Activated naive CD4-positive, alpha-beta T cell treated with anti-CD3 and anti-CD28 coated beads for 36 hours (primary cell): ENCODE measurements at regions of chr11 and their contacts with region 1.

Region 1: GRCh38 chr11:20387241-20388095 is at the start of gene PRMT3:
- DNase-seq: peak; percentile 96
- H3K4me3 Mint-ChIP-seq: peak within 1 kb of the TSS; percentile 96
- H3K27ac Mint-ChIP-seq: peak within 1 kb of the TSS; percentile 99
- H3K4me1 Mint-ChIP-seq: peaks cover 32% of the 10 kb centered on the region
- H3K27me3 Mint-ChIP-seq: no peaks in the 10 kb centered on the region
- total RNA-seq, gene PRMT3: 31.0 to 33.2 TPM

Region 2: DNA sequence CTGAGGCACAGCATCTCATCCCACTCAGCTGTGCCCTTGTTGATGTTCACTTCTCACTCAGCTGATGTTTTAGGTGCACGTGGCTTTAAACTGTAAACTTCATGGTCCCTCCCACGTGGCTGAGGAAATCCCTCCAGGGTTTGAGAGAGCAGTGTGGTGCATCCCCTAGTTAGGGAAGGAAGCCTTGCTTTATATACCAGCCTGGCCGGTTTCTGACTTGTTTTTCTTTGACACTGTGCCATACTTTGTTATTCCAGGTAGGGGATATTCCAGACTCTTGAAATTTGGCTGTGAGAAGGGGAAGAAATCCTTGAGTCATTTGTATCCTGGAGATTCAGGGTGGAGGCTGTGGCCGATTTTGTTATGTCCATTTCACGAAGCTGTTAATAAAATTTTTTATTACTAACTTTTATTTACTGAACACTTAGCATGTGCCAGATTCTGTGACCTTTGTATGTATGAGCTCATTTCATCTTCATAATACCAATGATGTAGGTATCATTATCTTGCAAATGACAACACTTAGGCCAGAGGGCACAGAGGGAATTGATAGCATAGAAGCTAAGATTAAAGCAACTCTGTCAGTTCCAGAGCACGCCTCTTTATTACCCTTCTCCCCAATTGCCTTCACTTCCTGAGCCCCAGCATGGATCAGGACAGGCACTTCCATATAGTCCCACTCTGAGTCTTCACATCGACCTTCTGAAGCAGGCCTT is 558.2 kb before region 1 on chr11:
- CTCF ChIA-PET with region 1: no interaction called
- intact Hi-C with region 1: no loop called
- DNase-seq: no peak
- H3K4me3 Mint-ChIP-seq: no peak overlapping the region
- H3K27ac Mint-ChIP-seq: no peak overlapping the region
- H3K4me1 Mint-ChIP-seq: no peaks in the 10 kb centered on the region
- H3K27me3 Mint-ChIP-seq: no peaks in the 10 kb centered on the region

Region 3: GRCh38 chr11:20363500-20364411 is 23.7 kb before region 1 on chr11 and contains the start of gene HTATIP2:
- CTCF ChIA-PET with region 1: interaction called, 5 read pairs
- intact Hi-C with region 1: loop called (anchors 1 kb)
- DNase-seq: peak; percentile 75
- H3K4me3 Mint-ChIP-seq: peak within 1 kb of the TSS; percentile 82
- H3K27ac Mint-ChIP-seq: peak within 1 kb of the TSS; percentile 91
- H3K4me1 Mint-ChIP-seq: peaks cover 68% of the 10 kb centered on the region
- H3K27me3 Mint-ChIP-seq: no peaks in the 10 kb centered on the region
- total RNA-seq, gene HTATIP2: 78.3 to 80.7 TPM

Region 4: DNA sequence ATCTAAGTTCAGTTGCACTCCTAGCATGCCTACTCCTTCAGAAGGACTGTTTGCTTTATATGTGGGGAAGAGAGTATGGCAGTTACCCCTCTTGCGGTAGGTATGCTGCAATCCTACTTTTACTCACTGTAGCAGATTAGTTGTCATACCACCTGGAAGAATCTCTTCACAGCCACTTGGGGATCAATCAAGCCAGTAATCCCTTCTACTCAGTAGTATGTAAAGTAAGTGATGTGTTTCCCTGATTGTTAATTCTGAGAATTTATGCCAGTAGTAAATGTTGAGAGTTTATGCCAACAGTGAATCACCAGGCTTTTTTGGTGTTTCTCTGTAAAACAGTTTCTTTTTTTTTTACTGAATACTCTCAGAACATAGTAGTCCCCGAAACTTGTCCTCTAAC is 34.5 kb after region 1 on chr11:
- CTCF ChIA-PET with region 1: no interaction called
- intact Hi-C with region 1: loop called (anchors 2 kb)
- DNase-seq: no peak
- H3K4me3 Mint-ChIP-seq: no peak overlapping the region
- H3K27ac Mint-ChIP-seq: peak overlapping the region; percentile 61
- H3K4me1 Mint-ChIP-seq: peaks cover 17% of the 10 kb centered on the region
- H3K27me3 Mint-ChIP-seq: no peaks in the 10 kb centered on the region

Region 5: DNA sequence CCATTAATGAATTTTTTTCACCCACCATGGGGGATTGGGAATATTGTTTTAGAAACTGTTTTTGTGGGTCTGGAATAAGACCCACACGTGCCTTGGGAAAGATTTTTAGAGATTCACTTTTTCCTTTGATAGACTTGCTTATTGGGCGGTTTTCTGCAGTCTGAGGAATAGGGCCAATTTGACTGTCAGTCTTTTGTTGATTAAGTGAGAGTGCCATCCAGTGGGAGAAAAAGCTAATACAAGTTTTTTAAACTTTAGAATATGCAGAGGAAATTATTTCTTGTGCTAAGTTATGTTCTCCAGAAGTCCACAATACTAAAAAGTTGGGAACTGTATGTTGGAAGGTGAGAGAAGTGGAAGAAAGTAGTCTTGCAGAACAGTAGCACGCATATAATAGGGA is 56.1 kb after region 1 on chr11:
- CTCF ChIA-PET with region 1: no interaction called
- intact Hi-C with region 1: loop called (anchors 2 kb)
- DNase-seq: no peak
- H3K4me3 Mint-ChIP-seq: no peak overlapping the region
- H3K27ac Mint-ChIP-seq: no peak overlapping the region
- H3K4me1 Mint-ChIP-seq: peaks cover 2% of the 10 kb centered on the region
- H3K27me3 Mint-ChIP-seq: no peaks in the 10 kb centered on the region

Region 6: DNA sequence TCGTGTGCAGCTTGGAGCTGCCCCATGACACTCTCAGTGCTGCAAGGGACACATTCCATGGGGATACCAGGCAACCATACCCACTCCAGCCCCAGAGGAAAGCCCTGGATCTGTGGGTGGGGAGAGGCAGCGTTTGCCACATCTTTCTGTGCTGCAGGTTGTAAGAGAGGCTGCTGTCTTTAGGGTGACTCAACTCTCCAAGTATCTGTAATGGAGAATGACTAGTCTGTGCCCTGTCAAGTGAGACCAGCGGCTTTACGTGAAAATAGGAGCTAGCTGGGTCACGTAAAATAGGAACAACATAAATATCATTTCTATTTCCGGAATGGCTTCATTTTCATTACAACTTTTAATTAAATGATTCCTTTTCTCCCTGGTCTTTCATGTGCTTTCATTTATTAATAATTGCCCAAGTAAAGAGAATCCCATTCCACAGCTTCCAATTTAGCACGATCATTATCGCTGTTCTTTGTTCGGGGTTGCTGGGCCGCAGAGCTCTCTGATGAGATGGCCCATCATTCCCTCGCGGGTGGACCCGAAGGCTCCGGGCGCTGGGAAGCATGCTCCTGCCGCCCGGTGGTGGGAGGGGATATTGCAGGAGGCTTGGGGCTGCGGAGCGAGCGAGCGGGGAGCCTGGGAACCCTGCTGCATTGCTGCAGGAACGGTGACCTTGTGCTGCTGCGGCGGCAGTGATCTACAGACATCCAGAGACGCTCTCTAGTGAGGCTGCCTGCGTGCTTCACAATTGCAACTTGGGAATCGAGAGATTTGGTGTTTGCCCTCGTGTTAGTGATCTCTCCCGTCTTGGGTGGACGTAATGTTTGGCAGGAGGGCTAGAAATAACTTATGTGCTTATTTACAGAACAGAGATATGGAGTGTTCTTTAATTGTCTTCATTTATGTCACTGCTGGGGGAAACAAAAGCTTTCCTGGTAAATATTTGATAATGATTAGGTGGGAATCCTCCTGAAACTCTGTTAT is 222.5 kb after region 1 on chr11:
- CTCF ChIA-PET with region 1: interaction called, 3 read pairs
- intact Hi-C with region 1: loop called (anchors 1 kb)
- DNase-seq: peak; percentile 77
- H3K4me3 Mint-ChIP-seq: peak overlapping the region; percentile 28
- H3K27ac Mint-ChIP-seq: no peak overlapping the region
- H3K4me1 Mint-ChIP-seq: peaks cover 7% of the 10 kb centered on the region
- H3K27me3 Mint-ChIP-seq: peaks cover 72% of the 10 kb centered on the region